Ovary (tissue), 10 donors: ENCODE measurements at regions of chrX and their contacts with region 1.

Region 1: GRCh38 chrX:24479924-24480323 is 14.8 kb downstream of the PDK3 start:
- DNase-seq: no peak
- H3K4me3 ChIP-seq: no peak overlapping the region
- H3K27ac ChIP-seq: no peak overlapping the region
- H3K4me1 ChIP-seq: no peaks in the 10 kb centered on the region
- H3K27me3 ChIP-seq: no peaks in the 10 kb centered on the region
- CTCF ChIP-seq: no peak
- EP300 ChIP-seq: no peak
- POLR2A ChIP-seq: no peak

Region 2: GRCh38 chrX:24316111-24316510 is 163.8 kb before region 1 on chrX:
- intact Hi-C with region 1: no loop called
- DNase-seq: no peak
- H3K4me3 ChIP-seq: no peak overlapping the region
- H3K27ac ChIP-seq: no peak overlapping the region
- H3K4me1 ChIP-seq: peaks cover 2% of the 10 kb centered on the region
- H3K27me3 ChIP-seq: no peaks in the 10 kb centered on the region
- CTCF ChIP-seq: no peak
- EP300 ChIP-seq: no peak
- POLR2A ChIP-seq: no peak

Region 3: DNA sequence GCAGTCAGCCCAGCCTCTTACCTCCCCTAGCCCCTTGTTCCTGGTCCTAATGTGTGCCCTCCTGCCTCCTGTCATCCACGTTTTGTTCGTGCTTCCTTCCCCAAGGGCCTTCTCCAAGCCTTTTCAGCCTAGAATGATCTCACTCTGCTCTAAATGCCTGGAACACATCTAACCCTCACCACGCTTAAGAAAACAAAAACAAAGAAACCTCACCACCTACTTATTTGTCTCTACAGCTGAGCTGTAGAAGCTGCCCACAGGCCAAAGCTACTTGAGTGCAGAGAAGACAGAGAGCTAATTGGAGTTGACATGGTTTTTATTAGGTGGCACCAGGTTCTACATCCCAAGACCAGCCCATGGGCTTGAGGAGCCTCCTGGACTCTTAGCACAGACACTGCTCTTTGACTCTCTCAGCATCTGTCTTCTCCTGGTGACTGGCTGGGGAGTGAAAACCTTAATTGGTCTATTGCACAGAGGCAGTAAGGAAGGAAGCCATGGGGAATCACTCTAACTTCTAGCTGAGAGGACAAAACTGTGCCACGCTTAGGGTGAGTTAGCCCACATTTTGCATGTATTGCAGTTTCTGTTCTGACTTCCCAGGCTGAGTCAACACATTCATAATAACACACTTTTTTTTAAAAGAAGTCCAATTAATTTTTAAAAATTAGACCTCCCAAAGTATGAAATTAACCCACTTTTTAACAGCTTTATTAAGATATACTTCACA is 67.1 kb before region 1 on chrX:
- intact Hi-C with region 1: loop called in 1 of 4 experiments (anchors 10 kb)
- DNase-seq: no peak
- H3K4me3 ChIP-seq: no peak overlapping the region
- H3K27ac ChIP-seq: no peak overlapping the region
- H3K4me1 ChIP-seq: no peaks in the 10 kb centered on the region
- H3K27me3 ChIP-seq: no peaks in the 10 kb centered on the region
- CTCF ChIP-seq: no peak
- EP300 ChIP-seq: no peak
- POLR2A ChIP-seq: no peak

Region 4: DNA sequence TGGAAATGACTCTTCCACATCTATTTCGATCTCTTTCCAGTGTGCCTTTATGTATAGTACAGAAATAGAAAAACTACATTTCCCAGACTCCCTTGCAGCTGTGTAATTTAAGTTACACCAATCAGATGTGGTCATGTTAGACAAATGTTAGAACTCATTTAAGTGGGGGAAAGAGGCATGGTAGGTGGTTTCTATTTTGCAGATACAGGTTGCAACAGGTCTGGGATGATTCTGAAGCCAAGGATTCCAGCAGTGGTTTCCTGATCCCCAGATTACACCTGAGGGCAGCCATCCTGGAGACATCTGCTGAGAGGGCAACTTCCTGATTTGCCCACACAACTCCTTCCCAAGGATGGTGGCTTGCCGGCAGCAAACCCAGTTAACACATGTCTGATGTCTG is 53.5 kb before region 1 on chrX:
- intact Hi-C with region 1: no loop called
- DNase-seq: no peak
- H3K4me3 ChIP-seq: no peak overlapping the region
- H3K27ac ChIP-seq: peak overlapping the region in 1 of 2 donors; percentile 42
- H3K4me1 ChIP-seq: peaks cover 2% of the 10 kb centered on the region
- H3K27me3 ChIP-seq: no peaks in the 10 kb centered on the region
- CTCF ChIP-seq: no peak
- EP300 ChIP-seq: no peak
- POLR2A ChIP-seq: no peak